Posterior vena cava (tissue), 2 donors: ENCODE measurements at regions of chr7 and their contacts with region 1.

Region 1: DNA sequence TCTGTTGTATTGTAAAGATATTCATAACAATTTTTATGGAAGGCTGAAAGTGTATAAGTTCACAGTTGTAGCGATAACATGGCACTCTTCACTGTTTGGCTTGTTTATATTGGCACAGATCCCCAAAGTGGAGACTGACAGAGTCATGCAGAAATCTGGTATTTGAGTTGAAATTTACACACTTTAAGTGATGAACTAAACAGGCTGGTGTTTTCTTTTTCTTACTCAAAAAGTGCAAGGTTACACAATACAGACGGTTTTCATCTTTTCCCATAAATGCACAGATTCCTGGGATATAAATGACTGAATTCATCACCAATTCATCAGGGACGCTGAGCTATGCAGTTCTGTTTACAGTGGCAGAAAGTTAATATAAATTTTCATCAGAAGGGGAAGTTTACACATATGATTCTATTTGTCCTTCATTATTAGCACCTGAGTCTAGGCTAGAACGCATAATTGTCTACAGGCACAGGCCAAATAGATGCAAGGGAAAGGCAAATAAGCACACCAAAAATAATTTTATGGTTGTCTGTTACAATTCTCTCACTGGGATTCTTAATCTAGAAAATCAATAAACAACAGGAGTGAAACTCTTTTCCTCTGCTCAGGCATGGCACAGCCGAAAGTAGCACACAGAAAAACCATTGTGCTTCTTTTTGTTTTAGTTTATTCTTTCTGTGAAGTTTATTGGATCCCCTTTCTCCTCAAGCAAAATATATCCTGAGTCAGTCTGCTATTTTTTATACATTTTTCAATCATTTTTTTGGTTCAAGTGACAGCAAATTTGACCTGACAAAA is 88.0 kb downstream of the FOXP2 start:
- DNase-seq: no peak

Region 2: DNA sequence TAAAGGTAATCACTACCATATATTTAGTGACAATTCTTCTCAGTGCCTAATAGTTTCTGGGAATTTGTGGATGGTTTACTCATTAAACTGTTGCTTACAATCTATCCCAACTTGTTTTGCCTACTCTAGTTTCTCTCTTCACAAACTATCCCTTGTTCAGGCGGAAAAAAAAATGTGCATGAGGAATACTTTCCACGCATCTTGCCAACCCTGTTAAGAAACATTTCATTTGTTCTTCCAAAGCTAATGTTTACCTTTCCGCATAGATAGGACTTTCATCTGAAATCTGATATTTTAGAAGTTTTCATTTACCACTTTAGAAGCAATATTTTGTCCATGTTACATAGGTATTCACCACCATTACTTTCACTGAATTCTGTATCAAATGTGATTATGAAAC is 611.1 kb after region 1 on chr7:
- intact Hi-C with region 1: loop called in 1 of 2 experiments (anchors 5 kb)
- DNase-seq: no peak